Thyroid gland (tissue), 4 donors: ENCODE measurements at regions of chr3 and their contacts with region 1.

Region 1: DNA sequence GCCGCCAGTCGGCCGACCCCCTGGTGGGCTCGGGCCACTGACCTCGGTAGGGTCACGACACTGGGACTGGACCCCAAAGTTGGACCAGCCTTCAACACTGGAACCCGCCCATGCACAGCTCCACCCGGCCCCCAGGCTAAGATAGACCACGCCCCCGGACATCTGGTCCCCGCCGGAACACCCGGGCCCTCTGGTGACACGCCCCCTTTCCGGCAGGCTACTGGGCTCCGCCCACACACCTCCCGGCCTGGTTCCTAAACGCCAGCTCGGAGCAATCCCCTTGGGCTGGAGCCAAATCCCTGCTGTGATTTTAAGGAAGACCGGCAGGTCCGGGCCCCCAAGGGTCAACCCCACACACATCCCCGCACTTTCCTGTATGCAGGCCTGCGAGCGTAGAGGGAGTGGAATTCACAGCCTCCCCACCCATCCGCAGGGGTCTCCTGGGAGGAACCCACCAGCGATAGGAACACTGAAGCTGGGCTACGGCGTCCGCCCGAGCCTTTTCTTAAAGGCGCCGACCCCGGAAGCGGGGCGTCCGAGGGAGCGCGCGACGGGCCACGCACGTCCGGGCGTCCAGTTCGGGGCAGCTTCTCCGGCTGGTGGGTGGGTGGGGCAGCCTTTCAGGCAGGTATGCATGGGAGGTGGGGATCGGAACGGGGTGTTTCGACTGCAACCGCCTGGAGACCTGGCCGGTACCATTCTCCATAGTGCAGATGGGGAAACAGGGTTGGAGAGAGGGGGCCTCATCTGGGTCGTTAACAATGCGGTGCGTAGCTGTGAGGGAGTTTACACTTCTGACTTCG is at the start of gene HEMK1:
- DNase-seq: peak; percentile 99
- H3K4me3 ChIP-seq: peak within 1 kb of the TSS; percentile 15 to 91 (median 41)
- H3K27ac ChIP-seq: peak within 1 kb of the TSS; percentile 83 to 90 (median 86)
- H3K4me1 ChIP-seq: peaks cover 24 to 41% of the 10 kb centered on the region in 2 donors
- H3K27me3 ChIP-seq: no peaks in the 10 kb centered on the region
- CTCF ChIP-seq: no peak
- POLR2A ChIP-seq: peak in 1 of 2 donors; percentile 82
- total RNA-seq, gene HEMK1: 13.9 to 20.8 (median 17.6) TPM

Region 2: GRCh38 chr3:50525987-50526386 is 43.2 kb before region 1 on chr3:
- intact Hi-C with region 1: no loop called
- DNase-seq: peak; percentile 39 to 55
- H3K4me3 ChIP-seq: no peak overlapping the region
- H3K27ac ChIP-seq: no peak overlapping the region
- H3K4me1 ChIP-seq: peaks cover 5 to 13% of the 10 kb centered on the region in 2 donors
- H3K27me3 ChIP-seq: no peaks in the 10 kb centered on the region
- CTCF ChIP-seq: no peak
- POLR2A ChIP-seq: no peak

Region 3: GRCh38 chr3:50611464-50612233 is 42.5 kb after region 1 on chr3 and contains the start of gene CISH:
- intact Hi-C with region 1: loop called (anchors 1 kb)
- DNase-seq: peak; percentile 98 to 99
- H3K4me3 ChIP-seq: peak within 1 kb of the TSS; percentile 69 to 96 (median 82)
- H3K27ac ChIP-seq: peak within 1 kb of the TSS; percentile 99 to 100 (median 100)
- H3K4me1 ChIP-seq: peaks cover 41 to 59% of the 10 kb centered on the region in 2 donors
- H3K27me3 ChIP-seq: no peaks in the 10 kb centered on the region
- CTCF ChIP-seq: peak in 3 of 6 experiments; percentile 14 to 30 (median 28)
- POLR2A ChIP-seq: peak; percentile 86 to 95
- total RNA-seq, gene CISH: 31.0 to 78.1 (median 48.0) TPM

Region 4: DNA sequence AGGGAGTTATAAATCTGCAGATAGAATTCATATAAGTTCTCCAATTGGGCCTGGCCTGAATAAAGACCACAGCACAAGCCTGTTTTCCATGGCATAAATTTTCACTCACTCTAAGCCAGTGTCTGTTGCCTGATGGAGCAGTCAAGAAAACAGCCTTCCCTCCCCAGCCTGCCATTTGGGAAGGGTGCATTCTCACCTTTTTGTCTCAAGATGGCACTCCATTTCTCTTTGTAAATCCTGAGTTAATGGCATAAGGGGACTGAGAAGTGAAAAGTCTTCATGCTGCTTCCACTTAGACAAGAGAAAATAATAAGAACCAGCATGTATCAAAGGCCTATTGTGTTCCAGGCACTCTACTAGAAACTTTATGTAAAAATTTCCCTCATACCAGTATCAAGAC is 700.3 kb after region 1 on chr3:
- intact Hi-C with region 1: no loop called
- DNase-seq: no peak
- H3K4me3 ChIP-seq: no peak overlapping the region
- H3K27ac ChIP-seq: no peak overlapping the region
- H3K4me1 ChIP-seq: no peaks in the 10 kb centered on the region
- H3K27me3 ChIP-seq: no peaks in the 10 kb centered on the region
- CTCF ChIP-seq: no peak
- POLR2A ChIP-seq: no peak

Region 5: DNA sequence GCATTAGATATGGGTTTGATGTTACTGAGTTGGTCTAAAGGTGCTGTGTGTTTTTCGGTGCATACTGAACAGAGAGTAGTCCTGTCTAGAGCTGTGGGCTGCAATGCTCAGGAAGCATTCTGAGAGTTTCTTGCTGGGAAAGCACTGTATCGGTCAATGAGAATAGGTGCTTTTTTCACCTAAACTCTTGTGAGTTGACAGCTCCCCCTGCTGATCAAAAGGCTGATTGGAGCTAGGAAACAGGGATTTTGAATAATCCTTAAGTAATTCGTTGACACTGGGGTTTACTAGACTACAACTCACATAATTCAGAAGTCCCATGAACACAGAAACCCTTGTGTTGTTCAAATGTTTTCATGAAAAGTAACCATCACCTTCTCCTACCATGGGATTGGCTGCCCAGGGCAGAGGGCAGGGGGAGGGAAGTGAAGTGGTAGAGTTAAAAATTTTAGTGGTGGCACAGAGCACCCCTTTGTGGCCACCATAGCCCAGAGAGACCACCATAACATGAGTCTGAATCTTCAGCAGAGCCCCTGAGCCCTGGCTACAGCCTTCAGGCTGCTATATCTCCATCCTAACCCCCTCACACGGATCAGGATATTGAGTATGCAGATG is 802.9 kb after region 1 on chr3:
- intact Hi-C with region 1: loop called (anchors 10 kb)
- DNase-seq: peak; percentile 54 to 66
- H3K4me3 ChIP-seq: no peak overlapping the region
- H3K27ac ChIP-seq: no peak overlapping the region
- H3K4me1 ChIP-seq: no peaks in the 10 kb centered on the region
- H3K27me3 ChIP-seq: no peaks in the 10 kb centered on the region
- CTCF ChIP-seq: peak in 4 of 6 experiments; percentile 56 to 79 (median 62)
- POLR2A ChIP-seq: no peak